Endothelial cell of umbilical vein (primary cell): ENCODE measurements at regions of chrX and their contacts with region 1.

Region 1: GRCh38 chrX:68121371-68121770 is 311.9 kb downstream of the OPHN1 start:
- DNase-seq: no peak
- H3K4me3 ChIP-seq: no peak overlapping the region
- H3K27ac ChIP-seq: no peak overlapping the region
- H3K4me1 ChIP-seq: no peaks in the 10 kb centered on the region
- H3K27me3 ChIP-seq: no peaks in the 10 kb centered on the region
- CTCF ChIP-seq: no peak
- POLR2A ChIP-seq: no peak

Region 2: DNA sequence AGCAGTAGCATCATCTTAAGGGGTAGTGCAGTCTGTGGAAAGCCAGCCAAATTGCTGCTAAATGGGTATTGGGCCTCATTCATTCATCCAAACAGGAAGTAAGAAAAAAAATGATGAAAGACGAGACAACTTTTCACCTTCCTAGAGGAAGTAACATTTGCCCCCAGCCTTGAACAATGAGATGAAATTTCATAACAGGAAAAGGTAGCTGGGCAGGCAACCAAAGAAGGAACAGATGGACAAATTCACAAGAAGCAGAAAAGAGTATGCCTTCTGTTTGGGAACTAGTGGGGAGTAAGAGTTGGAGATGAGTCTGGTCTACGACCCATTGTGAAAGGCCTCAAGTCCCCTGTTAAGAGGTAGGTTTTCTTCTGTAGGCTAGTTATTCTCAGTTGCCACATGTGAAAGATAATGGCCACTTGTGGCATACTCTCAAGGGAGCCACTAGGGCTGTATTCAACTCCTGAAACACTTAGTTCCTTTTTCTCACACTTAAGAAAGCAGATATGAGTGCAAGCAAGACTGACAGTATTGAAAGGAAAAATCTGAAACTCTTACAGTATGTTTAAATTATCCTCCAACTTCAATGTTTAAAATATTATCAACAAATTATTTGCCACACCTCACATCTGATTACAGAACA is 387.1 kb before region 1 on chrX:
- CTCF ChIA-PET with region 1: no interaction called
- POLR2A ChIA-PET with region 1: no interaction called
- dilution Hi-C with region 1: no loop called
- intact Hi-C with region 1: loop called (anchors 10 kb)
- DNase-seq: peak; percentile 80
- H3K4me3 ChIP-seq: no peak overlapping the region
- H3K27ac ChIP-seq: no peak overlapping the region
- H3K4me1 ChIP-seq: peaks cover 13% of the 10 kb centered on the region
- H3K27me3 ChIP-seq: no peaks in the 10 kb centered on the region
- CTCF ChIP-seq: no peak
- POLR2A ChIP-seq: no peak

Region 3: DNA sequence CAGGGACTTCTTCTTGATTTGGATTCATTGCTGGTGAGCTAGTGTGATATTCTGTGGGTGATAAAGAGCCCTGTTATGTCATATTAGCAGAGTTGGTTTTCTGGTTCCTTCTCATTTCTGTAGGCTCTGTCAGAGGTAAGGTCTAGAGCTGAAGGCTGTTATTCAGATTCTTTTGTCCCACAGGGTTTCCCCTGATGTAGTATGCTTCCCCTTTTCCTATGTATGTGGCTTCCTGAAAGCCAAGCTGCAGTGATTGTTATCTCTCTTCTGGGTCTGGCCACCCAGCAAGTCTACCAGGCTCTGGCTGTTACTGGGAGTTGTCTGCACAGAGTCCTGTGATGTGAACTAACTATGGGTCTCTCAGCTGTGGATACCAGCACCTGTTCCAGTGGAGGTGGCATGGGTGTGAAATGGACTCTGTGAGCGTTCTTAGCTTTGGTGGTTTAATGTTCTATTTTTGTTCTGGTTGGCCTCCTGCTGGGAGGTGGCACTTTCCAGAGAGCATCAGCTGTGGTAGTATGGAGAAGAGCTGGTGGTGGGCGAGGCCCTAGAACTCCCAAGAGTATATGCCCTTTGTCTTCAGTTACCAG is 203.9 kb before region 1 on chrX:
- CTCF ChIA-PET with region 1: no interaction called
- POLR2A ChIA-PET with region 1: no interaction called
- dilution Hi-C with region 1: no loop called
- intact Hi-C with region 1: no loop called
- DNase-seq: no peak
- H3K4me3 ChIP-seq: no peak overlapping the region
- H3K27ac ChIP-seq: no peak overlapping the region
- H3K4me1 ChIP-seq: no peaks in the 10 kb centered on the region
- H3K27me3 ChIP-seq: no peaks in the 10 kb centered on the region
- CTCF ChIP-seq: no peak
- POLR2A ChIP-seq: no peak

Region 4: DNA sequence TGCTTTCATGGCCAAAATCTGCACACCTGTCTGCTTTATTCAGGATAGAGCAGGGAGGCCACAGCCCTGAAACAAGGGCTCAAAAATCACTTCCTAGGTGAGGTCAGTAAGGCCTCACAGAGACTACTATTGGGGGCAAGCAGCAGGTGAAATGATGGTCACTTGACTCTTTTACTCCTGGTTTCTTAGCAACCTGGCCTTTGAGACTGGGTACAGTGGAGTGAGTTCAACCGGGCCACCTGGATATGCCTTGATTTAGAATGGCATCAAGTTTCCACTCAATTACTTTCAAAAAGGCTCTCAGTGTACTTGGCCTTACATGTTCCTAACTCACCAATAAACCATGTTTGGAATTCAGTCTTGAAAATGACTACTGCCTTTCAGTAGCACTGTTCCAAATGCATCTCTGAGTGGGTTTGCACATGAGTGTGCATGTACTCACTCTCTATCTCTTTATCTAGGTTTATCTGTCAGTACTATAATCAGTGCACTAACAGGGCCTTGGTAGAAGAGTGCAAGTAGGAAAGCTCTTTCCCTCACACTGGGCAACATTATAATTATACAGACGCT is 76.3 kb before region 1 on chrX:
- CTCF ChIA-PET with region 1: no interaction called
- POLR2A ChIA-PET with region 1: no interaction called
- dilution Hi-C with region 1: no loop called
- intact Hi-C with region 1: no loop called
- DNase-seq: no peak
- H3K4me3 ChIP-seq: no peak overlapping the region
- H3K27ac ChIP-seq: no peak overlapping the region
- H3K4me1 ChIP-seq: no peaks in the 10 kb centered on the region
- H3K27me3 ChIP-seq: no peaks in the 10 kb centered on the region
- CTCF ChIP-seq: no peak
- POLR2A ChIP-seq: no peak

Region 5: DNA sequence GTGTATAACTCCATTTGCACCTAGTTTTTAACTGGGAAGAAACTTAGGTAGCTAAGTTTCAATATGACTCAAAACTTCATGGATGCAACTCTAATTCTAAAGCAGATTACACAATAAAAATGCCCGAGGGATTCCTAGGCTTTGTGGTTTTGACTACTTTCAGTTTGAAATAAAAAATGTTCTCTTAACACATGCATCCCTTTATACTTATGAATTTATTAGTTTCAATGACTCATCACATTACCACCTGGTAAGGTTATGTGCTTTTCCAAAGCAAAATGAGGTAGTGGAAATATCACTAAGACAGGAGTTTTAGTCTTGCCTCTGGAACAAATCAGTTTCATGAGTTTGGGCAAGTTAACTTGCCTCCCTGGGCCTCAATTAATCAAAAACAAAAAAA is 186.4 kb after region 1 on chrX:
- CTCF ChIA-PET with region 1: no interaction called
- POLR2A ChIA-PET with region 1: no interaction called
- dilution Hi-C with region 1: no loop called
- intact Hi-C with region 1: no loop called
- DNase-seq: no peak
- H3K4me3 ChIP-seq: no peak overlapping the region
- H3K27ac ChIP-seq: no peak overlapping the region
- H3K4me1 ChIP-seq: no peaks in the 10 kb centered on the region
- H3K27me3 ChIP-seq: no peaks in the 10 kb centered on the region
- CTCF ChIP-seq: no peak
- POLR2A ChIP-seq: no peak